Mammary epithelial cell (primary cell): ENCODE measurements at regions of chr16 and their contacts with region 1.

Region 1: GRCh38 chr16:15576960-15577958 is 65.7 kb downstream of the MARF1 start:
- DNase-seq: no peak
- H3K4me3 ChIP-seq: no peak overlapping the region
- H3K27ac ChIP-seq: no peak overlapping the region
- H3K4me1 ChIP-seq: no peaks in the 10 kb centered on the region
- H3K27me3 ChIP-seq: no peaks in the 10 kb centered on the region
- CTCF ChIP-seq: no peak

Region 2: GRCh38 chr16:14449790-14450480 is 1127.3 kb before region 1 on chr16:
- CTCF ChIA-PET with region 1: no interaction called
- dilution Hi-C with region 1: no loop called
- in situ Hi-C with region 1: no loop called
- intact Hi-C with region 1: no loop called
- DNase-seq: no peak
- H3K4me3 ChIP-seq: no peak overlapping the region
- H3K27ac ChIP-seq: no peak overlapping the region
- H3K4me1 ChIP-seq: no peaks in the 10 kb centered on the region
- H3K27me3 ChIP-seq: no peaks in the 10 kb centered on the region
- CTCF ChIP-seq: no peak

Region 3: GRCh38 chr16:15509593-15510535 is 67.4 kb before region 1 on chr16:
- CTCF ChIA-PET with region 1: no interaction called
- dilution Hi-C with region 1: loop called (anchors 5 kb)
- in situ Hi-C with region 1: no loop called
- intact Hi-C with region 1: no loop called
- DNase-seq: no peak
- H3K4me3 ChIP-seq: no peak overlapping the region
- H3K27ac ChIP-seq: no peak overlapping the region
- H3K4me1 ChIP-seq: peaks cover 12% of the 10 kb centered on the region
- H3K27me3 ChIP-seq: no peaks in the 10 kb centered on the region
- CTCF ChIP-seq: no peak

Region 4: DNA sequence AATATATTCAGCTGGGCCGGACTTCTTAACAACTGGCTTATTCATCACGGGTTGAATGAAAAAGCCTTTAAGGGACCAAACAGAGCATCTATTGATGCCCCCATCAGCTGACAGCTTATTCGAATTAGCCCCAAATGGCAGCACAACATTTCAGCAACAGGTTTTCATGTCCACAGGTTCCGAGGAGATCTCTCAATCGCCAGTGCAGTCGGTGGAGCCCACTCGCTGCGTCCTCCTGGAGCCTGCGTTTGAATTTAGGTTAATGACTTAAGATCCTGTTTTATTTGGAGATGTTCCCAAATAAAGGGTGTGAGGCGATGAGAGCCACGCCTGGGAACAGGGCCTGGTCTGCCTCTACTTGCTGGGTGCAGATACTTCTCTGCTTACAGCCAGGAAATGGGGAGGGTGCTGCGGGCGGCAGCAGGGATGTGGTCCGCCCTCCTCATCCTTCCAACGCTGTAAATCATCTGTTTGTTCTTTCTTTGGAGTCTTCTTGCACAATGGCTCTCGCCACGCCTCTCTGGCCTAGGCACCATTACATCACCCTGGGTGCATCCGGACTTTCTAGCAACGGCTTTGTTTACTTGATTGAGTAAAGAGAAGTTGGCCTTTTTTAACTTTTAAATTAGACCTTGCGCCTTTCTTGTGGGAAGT is 95.4 kb after region 1 on chr16:
- CTCF ChIA-PET with region 1: no interaction called
- dilution Hi-C with region 1: loop called (anchors 5 kb)
- in situ Hi-C with region 1: no loop called
- intact Hi-C with region 1: no loop called
- DNase-seq: peak; percentile 99
- H3K4me3 ChIP-seq: no peak overlapping the region
- H3K27ac ChIP-seq: peak overlapping the region; percentile 98
- H3K4me1 ChIP-seq: peaks cover 44% of the 10 kb centered on the region
- H3K27me3 ChIP-seq: no peaks in the 10 kb centered on the region
- CTCF ChIP-seq: no peak